ENCODE measurements at regions of chr10 and their contacts with region 1.

Region 1: DNA sequence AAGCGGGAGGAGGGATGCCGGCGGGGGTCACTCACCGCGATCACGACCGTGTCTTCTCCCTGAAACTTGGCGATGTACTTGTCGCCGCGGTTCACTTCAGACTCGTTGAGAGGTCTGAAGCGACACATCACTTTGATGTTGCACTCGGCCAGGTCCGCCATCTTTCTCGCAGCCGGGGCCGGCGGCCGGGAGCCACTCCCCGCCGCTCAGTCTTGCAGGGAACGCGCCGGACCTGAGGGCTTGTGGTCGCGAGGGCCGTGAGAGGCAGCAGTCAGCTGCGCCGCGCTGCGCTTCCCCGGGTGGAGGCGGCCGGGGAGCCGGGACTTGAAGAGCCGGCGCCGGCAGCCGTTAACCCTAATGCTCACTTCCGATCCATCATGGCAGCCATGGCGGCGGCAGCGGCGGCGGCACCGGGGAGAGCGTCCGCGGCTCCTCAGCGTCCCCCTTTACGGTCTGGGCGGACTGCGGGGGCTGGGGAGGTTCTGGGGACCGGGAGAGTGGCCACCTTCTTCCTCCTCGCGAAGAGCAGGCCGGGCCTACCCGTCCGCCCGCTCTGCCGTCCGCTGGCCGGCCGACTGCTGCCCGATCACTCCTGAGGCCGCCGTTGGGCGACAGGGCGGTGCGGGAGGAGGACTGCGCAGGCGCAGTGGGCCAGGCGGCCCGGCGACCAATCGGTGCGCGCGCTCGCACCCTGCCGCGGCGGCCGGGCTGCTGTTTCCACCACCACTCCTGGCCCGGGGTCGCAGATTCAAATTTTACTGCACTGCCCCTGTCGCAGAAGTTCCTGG is at the start of gene KIF5B:
- DNase-seq: peak; percentile 84 to 93
- ATAC-seq: peak; percentile 93 to 97 (median 96)
- H3K4me3 ChIP-seq: peak within 1 kb of the TSS; percentile 75 to 98 (median 91)
- H3K27ac ChIP-seq: peak within 1 kb of the TSS; percentile 92 to 100 (median 99)
- H3K4me1 ChIP-seq: peaks cover under 1 to 47% (median 42%) of the 10 kb centered on the region in 9 donors
- H3K27me3 ChIP-seq: no peaks in the 10 kb centered on the region
- CTCF ChIP-seq: peak in 1 of 9 donors; percentile 8
- total RNA-seq, gene KIF5B: 113 to 205 (median 167) TPM

Region 2: DNA sequence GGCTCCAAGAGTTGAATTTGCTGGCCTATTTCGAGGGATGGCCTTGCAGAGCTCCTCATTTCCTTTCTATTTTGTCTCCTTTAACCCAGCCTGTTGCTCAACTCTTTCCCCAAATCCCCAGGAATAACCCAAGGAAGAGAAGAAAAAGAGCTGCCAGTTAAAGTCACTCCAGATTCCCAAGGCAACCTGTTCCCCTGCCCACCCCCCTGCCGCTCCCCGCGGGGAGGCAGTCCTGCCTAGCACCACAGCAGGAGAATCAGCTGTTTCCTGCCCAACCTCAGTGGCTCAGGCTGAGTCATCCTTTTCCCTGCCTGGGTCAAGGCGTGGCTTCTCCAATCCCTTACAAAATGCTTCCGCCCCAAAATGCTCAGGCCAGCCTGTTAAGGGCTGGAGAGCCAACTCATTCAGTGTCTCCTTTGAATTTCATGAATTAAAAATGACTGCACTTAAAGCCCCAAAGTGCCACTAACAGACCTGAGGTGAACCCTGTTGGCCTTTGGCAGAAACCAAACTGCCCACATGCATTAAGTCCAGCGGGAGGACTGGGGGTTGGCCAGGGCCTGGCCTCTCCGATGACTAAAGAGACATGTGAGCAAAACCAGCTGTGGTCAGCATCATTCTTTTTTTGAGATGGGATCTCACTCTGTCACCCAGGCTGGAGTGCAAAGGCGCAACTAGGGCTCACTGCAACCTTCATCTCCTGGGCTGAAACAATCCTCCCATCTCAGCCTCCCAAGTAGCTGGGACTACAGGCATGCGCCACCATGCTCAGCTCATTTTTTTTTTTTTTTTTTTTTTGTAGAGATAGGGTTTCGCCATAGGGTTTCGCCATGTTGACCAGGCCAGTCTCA is 83.4 kb after region 1 on chr10:
- intact Hi-C with region 1: loop called in 1 of 10 experiments (anchors 5 kb)
- DNase-seq: peak; percentile 78 to 86
- ATAC-seq: peak; percentile 92 to 96 (median 95)
- H3K4me3 ChIP-seq: no peak overlapping the region
- H3K27ac ChIP-seq: peak overlapping the region in 9 of 10 donors; percentile 47 to 90 (median 73)
- H3K4me1 ChIP-seq: peaks cover 3 to 36% (median 29%) of the 10 kb centered on the region in 9 donors
- H3K27me3 ChIP-seq: no peaks in the 10 kb centered on the region
- CTCF ChIP-seq: peak in 4 of 9 donors; percentile 23 to 43 (median 38)

Region 3: DNA sequence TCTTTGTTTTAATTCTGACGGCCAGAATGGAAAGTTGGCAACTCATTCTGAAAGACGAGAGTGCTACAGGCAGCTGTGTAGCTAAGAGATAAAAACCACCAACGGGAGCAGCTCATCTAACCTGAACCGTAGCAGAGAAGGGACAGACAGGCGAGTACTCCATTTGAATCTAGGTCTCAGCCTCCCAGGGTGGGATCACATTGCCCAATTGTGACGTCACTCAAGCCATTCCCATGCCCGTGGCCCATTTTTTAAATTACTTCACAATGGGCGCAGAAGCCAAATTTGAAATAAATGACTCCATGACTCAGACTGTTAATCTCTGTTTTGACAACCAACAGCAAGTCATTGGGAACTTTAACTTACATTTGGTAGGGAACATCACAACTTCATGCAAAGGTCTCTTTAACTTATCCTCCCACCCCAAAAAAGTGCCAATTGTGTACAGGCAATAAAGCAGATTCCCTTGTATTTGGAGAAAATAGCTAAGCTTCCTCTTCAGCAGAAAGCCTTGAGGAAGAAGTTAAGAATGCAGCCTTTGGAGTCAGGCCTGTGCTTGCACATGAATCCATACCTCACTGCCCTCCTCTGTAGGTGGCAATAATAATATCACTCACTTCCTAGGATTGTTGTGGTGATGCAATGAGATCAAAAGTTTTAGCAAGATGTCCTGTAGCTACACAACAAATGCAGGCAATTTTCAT is 93.4 kb after region 1 on chr10:
- intact Hi-C with region 1: loop called in 4 of 10 experiments (anchors 5 kb)
- DNase-seq: peak in 1 of 2 donors; percentile 76
- ATAC-seq: peak; percentile 85 to 98 (median 94)
- H3K4me3 ChIP-seq: peak overlapping the region in 2 of 10 donors; percentile 0 to 22
- H3K27ac ChIP-seq: peak overlapping the region in 9 of 10 donors; percentile 28 to 79 (median 65)
- H3K4me1 ChIP-seq: peaks cover 0 to 19% (median 13%) of the 10 kb centered on the region in 9 donors
- H3K27me3 ChIP-seq: no peaks in the 10 kb centered on the region
- CTCF ChIP-seq: no peak

Region 4: DNA sequence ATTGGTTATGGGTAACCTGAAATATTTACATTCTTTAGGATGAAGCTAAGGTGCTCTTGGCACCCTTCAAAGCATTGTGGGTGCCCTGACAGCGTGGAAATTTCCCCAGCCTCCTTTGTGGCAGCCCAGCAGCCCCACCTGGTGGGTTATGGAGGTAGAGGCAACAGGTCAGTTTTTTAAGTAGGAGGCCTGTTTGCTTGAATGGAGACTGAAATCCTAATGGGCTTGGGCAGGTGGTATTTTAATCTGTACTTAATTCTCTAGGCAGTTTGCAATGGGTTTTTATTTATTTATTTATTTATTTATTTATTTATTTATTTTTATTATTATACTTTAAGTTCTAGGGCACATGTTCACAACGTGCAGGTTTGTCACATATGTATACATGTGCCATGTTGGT is 151.5 kb after region 1 on chr10:
- intact Hi-C with region 1: loop called in 1 of 10 experiments (anchors 10 kb)
- DNase-seq: peak; percentile 24 to 34
- ATAC-seq: peak in 3 of 8 donors; percentile 55 to 61 (median 58)
- H3K4me3 ChIP-seq: no peak overlapping the region
- H3K27ac ChIP-seq: no peak overlapping the region
- H3K4me1 ChIP-seq: no peaks in the 10 kb centered on the region
- H3K27me3 ChIP-seq: no peaks in the 10 kb centered on the region
- CTCF ChIP-seq: peak; percentile 36 to 72 (median 65)

Region 5: DNA sequence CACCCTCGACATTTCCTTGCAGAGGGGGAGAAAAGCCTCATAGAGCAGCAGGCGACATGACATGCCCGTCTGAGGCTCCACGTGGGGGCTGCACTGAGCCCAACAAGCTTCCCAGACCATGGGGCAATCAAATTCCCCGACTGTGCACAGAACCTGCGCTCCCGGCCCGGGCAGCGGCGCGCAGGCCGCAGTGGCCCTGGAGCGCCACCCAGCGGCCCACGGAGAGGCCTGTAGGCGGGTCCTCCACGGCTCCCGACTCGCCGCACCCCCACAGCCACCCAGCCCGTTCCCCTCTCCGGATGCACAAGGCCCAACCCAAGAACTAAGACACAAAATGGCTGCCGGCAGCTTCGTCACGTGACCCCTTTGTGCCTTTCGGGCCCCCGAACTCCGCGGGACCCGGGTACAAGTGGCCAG is 290.1 kb after region 1 on chr10:
- intact Hi-C with region 1: loop called in 1 of 10 experiments (anchors 10 kb)
- DNase-seq: peak; percentile 95 to 97
- ATAC-seq: peak; percentile 96 to 99 (median 97)
- H3K4me3 ChIP-seq: peak overlapping the region; percentile 87 to 99 (median 93)
- H3K27ac ChIP-seq: peak overlapping the region; percentile 100
- H3K4me1 ChIP-seq: peaks cover 6 to 79% (median 64%) of the 10 kb centered on the region in 9 donors
- H3K27me3 ChIP-seq: no peaks in the 10 kb centered on the region
- CTCF ChIP-seq: peak; percentile 96 to 100 (median 98)

Region 6: DNA sequence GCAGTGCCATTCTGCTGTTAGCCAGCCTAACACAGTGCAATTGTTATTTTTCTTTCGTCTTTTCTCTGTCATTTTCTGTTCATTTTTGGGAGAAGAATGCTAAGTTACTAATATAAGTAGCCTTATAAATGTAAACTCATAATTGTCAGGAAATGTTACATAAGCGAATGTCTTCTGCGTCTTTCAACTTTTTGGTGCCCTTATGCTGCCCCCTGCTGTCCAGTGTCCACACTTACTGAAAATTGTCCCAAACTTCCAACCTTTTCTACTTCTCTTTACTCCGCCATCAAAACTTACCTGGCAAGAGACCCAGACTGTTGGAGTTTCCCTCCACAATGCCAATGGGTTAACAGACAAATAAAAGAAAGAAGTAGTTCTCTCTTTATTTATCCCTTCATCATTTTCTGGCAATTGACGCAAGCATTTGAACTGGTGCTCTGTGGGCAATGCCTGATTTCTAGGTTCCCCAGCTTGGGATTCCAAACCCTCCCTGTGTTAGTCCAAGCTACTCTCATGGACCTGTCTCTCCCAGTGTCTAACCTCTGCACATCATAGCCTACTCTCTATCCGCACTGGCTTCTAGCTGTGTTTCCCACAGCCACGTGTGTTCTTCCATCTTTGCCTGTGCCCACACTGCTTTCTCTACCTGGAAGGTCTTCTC is 311.9 kb after region 1 on chr10:
- intact Hi-C with region 1: loop called in 2 of 10 experiments (anchors 10 kb)
- DNase-seq: peak; percentile 44 to 84
- ATAC-seq: peak in 7 of 8 donors; percentile 28 to 63 (median 50)
- H3K4me3 ChIP-seq: peak overlapping the region in 4 of 10 donors; percentile 11 to 34 (median 26)
- H3K27ac ChIP-seq: peak overlapping the region in 6 of 10 donors; percentile 0 to 38 (median 32)
- H3K4me1 ChIP-seq: peaks cover 0 to 66% (median 33%) of the 10 kb centered on the region in 9 donors
- H3K27me3 ChIP-seq: no peaks in the 10 kb centered on the region
- CTCF ChIP-seq: peak; percentile 61 to 91 (median 84)

Region 7: GRCh38 chr10:32378363-32379317 is 322.6 kb after region 1 on chr10:
- intact Hi-C with region 1: loop called in 1 of 10 experiments (anchors 10 kb)
- DNase-seq: peak; percentile 93 to 96
- ATAC-seq: peak; percentile 99 to 100 (median 99)
- H3K4me3 ChIP-seq: peak overlapping the region; percentile 46 to 91 (median 72)
- H3K27ac ChIP-seq: peak overlapping the region; percentile 60 to 92 (median 87)
- H3K4me1 ChIP-seq: peaks cover 0 to 33% (median 19%) of the 10 kb centered on the region in 9 donors
- H3K27me3 ChIP-seq: no peaks in the 10 kb centered on the region
- CTCF ChIP-seq: no peak